WTC11 (cell line): ENCODE measurements at regions of chr11 and their contacts with region 1.

Region 1: DNA sequence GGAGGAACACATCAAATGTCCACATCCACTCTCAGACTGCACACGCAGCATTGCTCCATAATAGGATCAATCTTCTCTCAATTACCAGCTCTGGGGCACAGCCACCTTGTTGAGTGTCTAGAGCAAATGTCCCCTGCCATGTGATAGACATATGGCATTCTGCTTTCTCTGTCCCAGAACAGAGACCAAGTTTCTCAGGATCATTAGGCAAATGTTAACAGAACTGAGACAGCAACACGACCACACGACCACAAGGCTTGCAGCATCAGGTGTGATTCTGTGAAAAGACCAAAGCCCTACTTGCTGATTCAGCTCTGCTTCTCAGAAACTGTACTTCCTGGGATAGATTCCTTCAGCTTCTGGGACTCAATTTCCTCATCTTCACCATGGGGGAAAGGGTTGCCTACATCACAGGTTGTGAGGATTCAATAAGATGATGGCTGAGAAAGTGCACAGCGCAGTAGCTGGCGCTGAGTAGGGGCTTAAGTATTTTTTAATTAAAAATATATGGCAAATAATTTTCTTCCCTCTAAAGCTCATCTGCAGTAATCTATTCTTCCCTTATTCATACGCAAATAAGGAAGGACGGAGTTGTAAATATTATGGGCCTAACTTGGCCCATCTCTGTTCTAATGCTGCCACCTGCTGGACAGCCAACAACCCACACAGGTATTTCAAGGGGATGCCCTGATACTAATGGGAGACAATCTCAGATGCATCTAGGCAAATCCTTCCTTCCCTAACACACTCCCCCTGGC is 54.3 kb upstream of the USP47 start:
- DNase-seq: peak; percentile 79
- ATAC-seq: peak; percentile 94
- H3K4me3 Mint-ChIP-seq: no peak overlapping the region
- H3K27ac Mint-ChIP-seq: no peak overlapping the region
- H3K4me1 Mint-ChIP-seq: peaks cover 14% of the 10 kb centered on the region
- H3K27me3 Mint-ChIP-seq: no peaks in the 10 kb centered on the region
- CTCF ChIP-seq: peak; percentile 81

Region 2: GRCh38 chr11:11621573-11622319 is 165.7 kb before region 1 on chr11 and contains the start of gene GALNT18:
- CTCF ChIA-PET with region 1: interaction called, 25 read pairs
- POLR2A ChIA-PET with region 1: no interaction called
- DNase-seq: peak; percentile 93
- ATAC-seq: peak; percentile 94
- H3K4me3 Mint-ChIP-seq: peak within 1 kb of the TSS; percentile 83
- H3K27ac Mint-ChIP-seq: no peak within 1 kb of the TSS
- H3K4me1 Mint-ChIP-seq: peaks cover 28% of the 10 kb centered on the region
- H3K27me3 Mint-ChIP-seq: peaks cover 76% of the 10 kb centered on the region
- CTCF ChIP-seq: no peak
- total RNA-seq, gene GALNT18: 4.4 to 5.0 TPM (median 5.0 TPM) in 3 replicates

Region 3: GRCh38 chr11:11722861-11723260 is 64.6 kb before region 1 on chr11:
- CTCF ChIA-PET with region 1: interaction called, 12 read pairs
- POLR2A ChIA-PET with region 1: no interaction called
- DNase-seq: no peak
- ATAC-seq: peak; percentile 87
- H3K4me3 Mint-ChIP-seq: no peak overlapping the region
- H3K27ac Mint-ChIP-seq: no peak overlapping the region
- H3K4me1 Mint-ChIP-seq: no peaks in the 10 kb centered on the region
- H3K27me3 Mint-ChIP-seq: peaks cover 3% of the 10 kb centered on the region; the same call in 1 of the 2 replicates
- CTCF ChIP-seq: no peak

Region 4: GRCh38 chr11:11884774-11885481 is 97.4 kb after region 1 on chr11:
- CTCF ChIA-PET with region 1: no interaction called
- POLR2A ChIA-PET with region 1: no interaction called
- DNase-seq: no peak
- ATAC-seq: no peak
- H3K4me3 Mint-ChIP-seq: no peak overlapping the region
- H3K27ac Mint-ChIP-seq: no peak overlapping the region
- H3K4me1 Mint-ChIP-seq: 0 out of 2 replicates have a peak, but pooled peaks cover 3% of the 10 kb centered on the region
- H3K27me3 Mint-ChIP-seq: no peaks in the 10 kb centered on the region
- CTCF ChIP-seq: no peak